ENCODE measurements at regions of chr21 and their contacts with region 1.

Region 1: GRCh38 chr21:33266050-33266788 is at the start of gene IL10RB:
- DNase-seq: peak; percentile 85
- H3K4me3 ChIP-seq: peak within 1 kb of the TSS; percentile 78
- H3K27ac ChIP-seq: peak within 1 kb of the TSS; percentile 70
- H3K4me1 ChIP-seq: peaks cover 60% of the 10 kb centered on the region
- CTCF ChIP-seq: no peak
- total RNA-seq, gene IL10RB: 44.3 and 48.0 TPM in 2 replicates

Region 2: GRCh38 chr21:32770871-32771523 is 495.2 kb before region 1 on chr21:
- CTCF ChIA-PET with region 1: no interaction called
- POLR2A ChIA-PET with region 1: no interaction called
- intact Hi-C with region 1: loop called (anchors 5 kb)
- DNase-seq: peak; percentile 83
- H3K4me3 ChIP-seq: peak overlapping the region; percentile 88
- H3K27ac ChIP-seq: peak overlapping the region; percentile 87
- H3K4me1 ChIP-seq: peaks cover 26% of the 10 kb centered on the region
- CTCF ChIP-seq: no peak

Region 3: GRCh38 chr21:33127154-33127893 is 138.9 kb before region 1 on chr21:
- CTCF ChIA-PET with region 1: no interaction called
- POLR2A ChIA-PET with region 1: no interaction called
- intact Hi-C with region 1: no loop called
- DNase-seq: peak; percentile 65
- H3K4me3 ChIP-seq: peak overlapping the region; percentile 44
- H3K27ac ChIP-seq: no peak overlapping the region
- H3K4me1 ChIP-seq: no peaks in the 10 kb centered on the region
- CTCF ChIP-seq: peak; percentile 94

Region 4: DNA sequence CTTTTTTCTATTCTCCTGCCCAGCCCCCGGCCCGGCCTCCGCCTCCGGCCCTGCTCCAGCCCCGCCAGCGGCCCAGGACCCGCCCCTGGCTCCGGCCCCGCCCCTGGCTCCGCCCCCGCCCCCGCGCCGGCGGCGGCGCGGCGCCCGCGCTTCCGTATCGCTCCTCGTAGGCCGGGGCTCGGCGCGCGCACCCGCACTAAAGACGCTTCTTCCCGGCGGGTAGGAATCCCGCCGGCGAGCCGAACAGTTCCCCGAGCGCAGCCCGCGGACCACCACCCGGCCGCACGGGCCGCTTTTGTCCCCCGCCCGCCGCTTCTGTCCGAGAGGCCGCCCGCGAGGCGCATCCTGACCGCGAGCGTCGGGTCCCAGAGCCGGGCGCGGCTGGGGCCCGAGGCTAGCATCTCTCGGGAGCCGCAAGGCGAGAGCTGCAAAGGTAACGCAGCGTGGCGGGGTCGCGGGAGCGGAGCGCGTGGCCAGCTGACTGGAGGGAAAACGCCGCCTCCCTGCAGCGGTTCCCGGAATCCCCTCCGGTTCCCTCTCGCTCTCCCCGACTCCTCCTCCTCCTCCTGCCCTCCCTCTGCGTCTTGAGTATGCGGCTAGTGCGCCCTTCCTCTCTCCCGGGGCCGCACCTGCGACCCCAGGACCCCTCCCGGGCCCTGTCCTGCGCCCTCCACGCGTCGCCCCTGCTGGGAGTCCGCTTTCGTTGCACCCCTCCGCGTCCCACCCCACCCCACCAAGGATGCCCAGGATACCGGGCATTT is 36.3 kb before region 1 on chr21 and contains the start of gene IFNAR2:
- CTCF ChIA-PET with region 1: no interaction called
- POLR2A ChIA-PET with region 1: interaction called, 5 read pairs
- intact Hi-C with region 1: loop called (anchors 5 kb)
- DNase-seq: peak; percentile 75
- H3K4me3 ChIP-seq: peak within 1 kb of the TSS; percentile 86
- H3K27ac ChIP-seq: peak within 1 kb of the TSS; percentile 76
- H3K4me1 ChIP-seq: peaks cover 46% of the 10 kb centered on the region
- CTCF ChIP-seq: no peak
- total RNA-seq, gene IFNAR2: 22.1 and 24.8 TPM in 2 replicates

Region 5: GRCh38 chr21:33247599-33247998 is 18.6 kb before region 1 on chr21:
- CTCF ChIA-PET with region 1: no interaction called
- POLR2A ChIA-PET with region 1: no interaction called
- intact Hi-C with region 1: no loop called
- DNase-seq: no peak
- H3K4me3 ChIP-seq: no peak overlapping the region
- H3K27ac ChIP-seq: no peak overlapping the region
- H3K4me1 ChIP-seq: no peaks in the 10 kb centered on the region
- CTCF ChIP-seq: no peak

Region 6: GRCh38 chr21:33308586-33309490 is 42.6 kb after region 1 on chr21:
- CTCF ChIA-PET with region 1: no interaction called
- POLR2A ChIA-PET with region 1: interaction called, 6 read pairs
- intact Hi-C with region 1: loop called (anchors 1 kb)
- DNase-seq: peak; percentile 100
- H3K4me3 ChIP-seq: peak overlapping the region; percentile 42
- H3K27ac ChIP-seq: peak overlapping the region; percentile 99
- H3K4me1 ChIP-seq: peaks cover 100% of the 10 kb centered on the region
- CTCF ChIP-seq: peak; percentile 80

Region 7: DNA sequence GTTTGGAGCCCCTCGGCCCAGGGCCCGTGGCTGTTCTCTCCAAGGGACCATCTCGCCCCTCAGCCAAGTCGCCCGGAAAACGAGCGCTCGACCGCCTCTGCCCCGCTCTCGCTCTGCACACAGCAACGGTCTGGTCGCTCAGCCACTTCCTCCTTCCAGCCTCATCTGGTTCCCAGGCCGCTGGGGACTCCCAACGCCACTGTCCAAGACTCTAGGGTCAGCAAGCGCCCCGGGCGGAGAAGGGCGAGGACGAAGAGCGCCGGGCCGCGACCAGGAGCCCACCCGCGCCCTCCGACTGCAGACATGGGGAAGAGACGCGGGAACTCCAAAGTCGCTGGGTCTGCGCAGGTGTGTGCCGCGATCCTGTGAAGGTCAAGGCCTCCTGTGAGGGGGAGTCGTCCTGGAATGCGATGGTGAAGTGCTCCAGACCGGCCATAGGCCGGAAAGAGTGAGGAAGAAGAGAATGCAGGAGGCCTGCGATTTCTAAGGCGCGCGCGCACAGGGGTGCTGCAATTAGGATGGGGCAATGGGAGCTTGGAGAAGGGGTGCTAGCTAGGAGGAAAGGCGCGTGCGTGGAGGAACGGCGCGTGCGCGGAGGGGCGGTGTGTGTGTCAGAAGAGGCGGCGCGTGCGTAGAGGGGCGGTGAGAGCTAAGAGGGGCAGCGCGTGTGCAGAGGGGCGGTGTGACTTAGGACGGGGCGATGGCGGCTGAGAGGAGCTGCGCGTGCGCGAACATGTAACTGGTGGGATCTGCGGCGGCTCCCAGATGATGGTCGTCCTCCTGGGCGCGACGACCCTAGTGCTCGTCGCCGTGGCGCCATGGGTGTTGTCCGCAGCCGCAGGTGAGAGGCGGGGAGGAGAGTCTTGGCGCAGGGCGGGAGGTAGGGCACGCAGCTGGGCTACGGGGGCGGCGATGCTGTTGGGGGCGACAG is 58.3 kb after region 1 on chr21 and contains the start of gene IFNAR1:
- CTCF ChIA-PET with region 1: no interaction called
- POLR2A ChIA-PET with region 1: interaction called, 6 read pairs
- intact Hi-C with region 1: loop called (anchors 1 kb)
- DNase-seq: peak; percentile 98
- H3K4me3 ChIP-seq: peak within 1 kb of the TSS; percentile 79
- H3K27ac ChIP-seq: peak within 1 kb of the TSS; percentile 87
- H3K4me1 ChIP-seq: peaks cover 36% of the 10 kb centered on the region
- CTCF ChIP-seq: 0 out of 2 replicates have a peak, but pooled peaks have one; percentile 25
- total RNA-seq, gene IFNAR1: 17.0 and 18.1 TPM in 2 replicates

Region 8: GRCh38 chr21:33441489-33442477 is 175.6 kb after region 1 on chr21:
- CTCF ChIA-PET with region 1: no interaction called
- POLR2A ChIA-PET with region 1: interaction called, 3 read pairs
- intact Hi-C with region 1: loop called (anchors 1 kb)
- DNase-seq: peak; percentile 85
- H3K4me3 ChIP-seq: peak overlapping the region; percentile 5
- H3K27ac ChIP-seq: peak overlapping the region; percentile 69
- H3K4me1 ChIP-seq: peaks cover 61% of the 10 kb centered on the region
- CTCF ChIP-seq: no peak